ENCODE measurements at regions of chr11 and their contacts with region 1.

Region 1: GRCh38 chr11:77047007-77047927 is 13.1 kb downstream of the B3GNT6 start:
- DNase-seq: peak; percentile 55 to 97 (median 80)
- ATAC-seq: peak; percentile 89
- H3K4me3 ChIP-seq: peak overlapping the region; percentile 41 to 58
- H3K4me3 Mint-ChIP-seq: peak overlapping the region; percentile 74
- H3K27ac ChIP-seq: peak overlapping the region; percentile 45 to 46
- H3K27ac Mint-ChIP-seq: peak overlapping the region; percentile 50
- H3K4me1 ChIP-seq: peaks cover 16% of the 10 kb centered on the region
- H3K4me1 Mint-ChIP-seq: peaks cover 15% of the 10 kb centered on the region
- H3K27me3 ChIP-seq: peaks cover 0 to 3% of the 10 kb centered on the region in 2 experiments
- H3K27me3 Mint-ChIP-seq: peaks cover 11% of the 10 kb centered on the region
- CTCF ChIP-seq: peak; percentile 75

Region 2: DNA sequence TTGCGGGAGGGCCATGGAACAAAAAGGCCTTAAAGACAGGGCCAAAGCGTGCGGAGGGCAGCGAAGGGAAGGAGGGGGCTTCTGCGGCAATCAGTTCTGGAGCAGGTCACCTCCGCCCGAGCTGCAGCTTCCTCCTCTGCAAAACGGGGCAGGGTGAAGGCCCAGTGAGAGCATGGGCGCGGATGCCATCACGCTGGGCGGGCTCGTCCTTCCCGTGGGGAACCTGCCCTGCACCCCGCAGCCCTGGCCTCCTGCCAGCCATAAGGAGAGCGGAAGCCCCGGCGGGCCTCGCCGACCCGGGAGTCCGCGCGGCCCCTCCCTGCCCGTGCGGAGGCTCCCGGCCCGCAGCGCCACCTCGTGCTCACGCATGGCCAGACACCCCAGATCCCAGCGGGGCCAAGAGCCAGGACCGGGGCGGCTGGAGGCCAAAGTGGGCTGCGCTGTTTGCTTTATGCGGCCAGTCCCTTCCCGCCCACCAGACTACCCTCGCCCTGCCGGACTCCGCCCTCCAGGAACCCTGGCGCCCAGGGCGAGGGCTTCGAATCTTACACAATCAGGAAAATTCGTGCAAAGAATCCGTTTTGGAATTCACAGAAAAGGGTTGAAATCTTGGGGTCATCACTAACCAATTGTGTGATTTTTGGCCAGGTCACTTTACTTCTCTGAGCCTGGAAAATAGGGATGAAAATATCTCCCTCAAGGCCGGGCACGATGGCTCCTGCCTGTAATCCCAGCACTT is 248.0 kb before region 1 on chr11:
- CTCF ChIA-PET with region 1: no interaction called
- POLR2A ChIA-PET with region 1: no interaction called
- intact Hi-C with region 1: loop called in 1 of 2 experiments (anchors 5 kb)
- DNase-seq: peak; percentile 45 to 89 (median 78)
- ATAC-seq: peak; percentile 76
- H3K4me3 ChIP-seq: peak overlapping the region; percentile 34 to 51
- H3K4me3 Mint-ChIP-seq: peak overlapping the region; percentile 54
- H3K27ac ChIP-seq: no peak overlapping the region
- H3K27ac Mint-ChIP-seq: no peak overlapping the region
- H3K4me1 ChIP-seq: peaks cover 23% of the 10 kb centered on the region
- H3K4me1 Mint-ChIP-seq: peaks cover 21% of the 10 kb centered on the region
- H3K27me3 ChIP-seq: no peaks in the 10 kb centered on the region
- H3K27me3 Mint-ChIP-seq: peaks cover 4% of the 10 kb centered on the region
- CTCF ChIP-seq: peak; percentile 91

Region 3: DNA sequence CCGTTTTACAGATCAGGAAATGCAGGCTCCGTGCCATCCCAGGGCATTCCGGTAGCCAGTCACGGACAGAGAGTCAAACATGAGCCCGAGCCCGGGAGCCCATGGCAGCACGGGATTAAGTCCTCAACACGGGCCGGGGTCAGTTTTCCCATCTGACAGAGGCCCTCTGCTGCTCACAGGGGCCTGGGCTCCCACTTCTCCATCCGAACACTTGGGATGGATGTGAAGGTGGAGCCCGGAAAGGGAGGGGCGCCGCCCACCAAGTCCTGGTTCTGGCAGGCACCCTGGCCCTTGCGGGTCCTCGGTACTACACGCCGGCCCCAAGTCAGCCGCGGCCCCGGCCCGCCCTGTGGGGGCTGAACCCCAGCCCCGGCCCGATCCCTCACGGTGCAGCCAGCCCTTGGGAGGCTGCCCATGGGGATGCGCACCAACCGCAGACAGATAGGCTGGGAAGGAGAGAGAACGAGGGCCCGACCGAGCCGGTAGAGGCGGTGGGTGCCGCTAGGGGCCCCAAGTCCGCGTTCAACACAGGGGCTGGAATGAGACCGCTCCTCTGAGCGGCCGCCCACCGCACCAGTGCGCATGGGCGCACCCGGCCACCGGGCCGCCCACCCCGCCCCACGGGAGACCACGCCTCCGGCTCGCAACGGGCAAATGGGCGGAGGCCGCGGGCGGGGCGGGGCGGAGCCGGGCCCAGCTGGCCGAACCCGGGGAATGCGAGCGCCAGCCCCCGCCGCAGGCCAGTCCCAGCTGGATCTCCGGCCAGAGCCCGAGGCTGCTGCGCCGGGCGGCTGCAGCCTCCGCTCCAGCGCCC is 19.2 kb after region 1 on chr11 and contains the start of gene CAPN5:
- CTCF ChIA-PET with region 1: interaction called, 6 read pairs
- POLR2A ChIA-PET with region 1: no interaction called
- intact Hi-C with region 1: loop called (anchors 1 kb)
- DNase-seq: peak; percentile 68 to 93 (median 88)
- ATAC-seq: peak; percentile 91
- H3K4me3 ChIP-seq: peak within 1 kb of the TSS; percentile 56 to 87
- H3K4me3 Mint-ChIP-seq: peak within 1 kb of the TSS; percentile 83
- H3K27ac ChIP-seq: peak within 1 kb of the TSS; percentile 32 to 48
- H3K27ac Mint-ChIP-seq: peak within 1 kb of the TSS; percentile 69
- H3K4me1 ChIP-seq: peaks cover 22% of the 10 kb centered on the region
- H3K4me1 Mint-ChIP-seq: peaks cover 25% of the 10 kb centered on the region
- H3K27me3 ChIP-seq: no peaks in the 10 kb centered on the region
- H3K27me3 Mint-ChIP-seq: no peaks in the 10 kb centered on the region
- CTCF ChIP-seq: peak; percentile 40
- total RNA-seq, gene CAPN5: 6.5 to 7.4 TPM

Region 4: DNA sequence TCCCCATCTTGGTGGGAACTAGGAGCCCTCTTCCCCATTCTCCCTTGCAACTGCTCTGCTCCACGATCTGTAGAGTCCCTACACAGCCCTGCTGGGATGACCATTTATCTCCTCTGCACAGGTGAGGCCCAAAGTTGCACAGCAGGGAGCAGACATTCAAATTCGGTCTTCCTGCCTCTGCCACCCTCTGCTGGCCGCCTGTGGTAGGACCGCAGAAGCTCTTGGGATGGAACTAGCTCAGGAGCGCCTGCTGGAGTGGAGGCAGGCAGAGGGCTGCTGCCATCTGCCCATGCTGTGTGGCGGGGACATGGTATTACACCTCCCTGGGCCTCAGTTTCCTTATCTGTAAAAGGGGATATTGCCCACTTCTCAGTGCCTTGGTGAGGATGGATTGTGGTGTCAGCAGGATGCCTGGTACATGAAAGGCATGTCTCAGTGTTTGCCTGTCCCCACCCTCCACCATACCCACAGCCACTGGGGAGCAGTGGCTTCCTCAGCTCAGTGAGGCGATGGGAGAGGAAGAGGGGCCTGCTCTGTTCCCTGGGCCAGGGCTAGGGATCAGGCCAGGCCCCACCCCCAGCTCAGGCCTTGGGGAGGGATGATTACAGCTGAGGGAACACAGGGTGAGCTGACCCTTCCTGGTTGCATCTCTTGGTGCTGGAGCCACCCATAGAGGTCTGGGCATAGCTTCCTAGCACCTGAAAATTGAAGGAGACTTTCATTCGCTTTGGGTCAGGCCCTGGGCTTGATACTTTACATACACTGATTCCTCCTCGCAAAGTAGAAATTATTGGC is 44.1 kb after region 1 on chr11:
- CTCF ChIA-PET with region 1: interaction called, 140 read pairs
- POLR2A ChIA-PET with region 1: interaction called, 4 read pairs
- intact Hi-C with region 1: loop called (anchors 1 kb)
- DNase-seq: peak; percentile 67 to 86 (median 78)
- ATAC-seq: peak; percentile 100
- H3K4me3 ChIP-seq: no peak overlapping the region
- H3K4me3 Mint-ChIP-seq: no peak overlapping the region
- H3K27ac ChIP-seq: no peak overlapping the region
- H3K27ac Mint-ChIP-seq: no peak overlapping the region
- H3K4me1 ChIP-seq: no peaks in the 10 kb centered on the region
- H3K4me1 Mint-ChIP-seq: peaks cover 2% of the 10 kb centered on the region
- H3K27me3 ChIP-seq: no peaks in the 10 kb centered on the region
- H3K27me3 Mint-ChIP-seq: no peaks in the 10 kb centered on the region
- CTCF ChIP-seq: peak; percentile 80

Region 5: GRCh38 chr11:77351281-77351906 is 304.1 kb after region 1 on chr11:
- CTCF ChIA-PET with region 1: no interaction called
- POLR2A ChIA-PET with region 1: no interaction called
- intact Hi-C with region 1: no loop called
- DNase-seq: no peak
- ATAC-seq: no peak
- H3K4me3 ChIP-seq: no peak overlapping the region
- H3K4me3 Mint-ChIP-seq: no peak overlapping the region
- H3K27ac ChIP-seq: no peak overlapping the region
- H3K27ac Mint-ChIP-seq: no peak overlapping the region
- H3K4me1 ChIP-seq: no peaks in the 10 kb centered on the region
- H3K4me1 Mint-ChIP-seq: no peaks in the 10 kb centered on the region
- H3K27me3 ChIP-seq: no peaks in the 10 kb centered on the region
- H3K27me3 Mint-ChIP-seq: no peaks in the 10 kb centered on the region
- CTCF ChIP-seq: no peak

Region 6: DNA sequence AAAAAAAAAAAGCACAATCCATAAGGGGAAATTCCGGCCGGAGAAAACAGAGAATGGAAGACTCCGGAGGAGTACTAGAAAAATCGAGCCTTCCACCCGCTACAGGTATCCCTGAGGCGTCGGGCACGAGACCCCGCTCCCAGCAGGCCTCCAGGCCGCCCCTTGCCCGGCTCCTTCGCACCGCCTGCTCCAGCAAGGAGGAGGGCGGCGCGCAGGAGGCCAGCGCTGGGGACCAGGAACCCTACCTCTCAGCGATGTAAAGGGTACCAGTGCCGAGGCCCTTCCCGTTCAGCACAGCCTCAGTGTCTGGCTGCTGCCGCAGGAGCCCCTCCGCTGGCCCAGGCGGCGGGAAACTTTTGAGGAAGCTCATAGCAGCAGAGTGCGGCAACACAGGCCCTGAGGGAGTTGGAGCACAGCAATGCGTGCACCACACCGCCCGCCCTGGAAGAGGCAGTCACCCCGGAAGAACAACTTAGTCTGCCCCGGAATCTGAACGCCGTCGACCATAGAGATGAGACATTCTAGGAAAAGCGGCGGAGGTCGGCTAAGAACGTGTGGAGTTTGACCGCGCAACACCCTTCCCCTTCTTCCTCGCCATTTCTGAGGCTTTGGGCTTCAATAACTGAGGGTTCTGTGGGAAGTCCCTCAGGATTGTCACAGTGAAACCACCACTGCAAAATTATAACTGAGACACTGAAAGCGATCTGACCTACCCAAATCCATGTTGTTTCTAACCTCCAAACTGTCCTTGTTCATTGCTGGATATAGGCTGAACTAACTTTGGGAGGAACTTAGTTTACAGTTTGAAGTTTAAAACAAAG is 590.3 kb after region 1 on chr11 and contains the start of gene CLNS1A:
- CTCF ChIA-PET with region 1: no interaction called
- POLR2A ChIA-PET with region 1: no interaction called
- intact Hi-C with region 1: loop called in 1 of 2 experiments (anchors 5 kb)
- DNase-seq: peak; percentile 51 to 88 (median 81)
- ATAC-seq: peak; percentile 99
- H3K4me3 ChIP-seq: peak within 1 kb of the TSS; percentile 88 to 91
- H3K4me3 Mint-ChIP-seq: peak within 1 kb of the TSS; percentile 95
- H3K27ac ChIP-seq: peak within 1 kb of the TSS; percentile 62 to 80
- H3K27ac Mint-ChIP-seq: peak within 1 kb of the TSS; percentile 97
- H3K4me1 ChIP-seq: peaks cover 26% of the 10 kb centered on the region
- H3K4me1 Mint-ChIP-seq: peaks cover 43% of the 10 kb centered on the region
- H3K27me3 ChIP-seq: no peaks in the 10 kb centered on the region
- H3K27me3 Mint-ChIP-seq: no peaks in the 10 kb centered on the region
- CTCF ChIP-seq: no peak
- total RNA-seq, gene CLNS1A: 84.6 to 87.5 TPM